Endothelial cell of umbilical vein (primary cell): ENCODE measurements at regions of chrX and their contacts with region 1.

Region 1: GRCh38 chrX:15471016-15471415 is 22.1 kb downstream of the PIR start:
- DNase-seq: peak; percentile 67
- H3K4me3 ChIP-seq: no peak overlapping the region
- H3K27ac ChIP-seq: no peak overlapping the region
- H3K4me1 ChIP-seq: peaks cover 19% of the 10 kb centered on the region
- H3K27me3 ChIP-seq: no peaks in the 10 kb centered on the region
- CTCF ChIP-seq: peak; percentile 62 to 70
- POLR2A ChIP-seq: no peak

Region 2: GRCh38 chrX:15299941-15300851 is 170.8 kb before region 1 on chrX:
- CTCF ChIA-PET with region 1: interaction called, 3 read pairs
- POLR2A ChIA-PET with region 1: no interaction called
- dilution Hi-C with region 1: no loop called
- intact Hi-C with region 1: loop called (anchors 2 kb)
- DNase-seq: peak; percentile 53
- H3K4me3 ChIP-seq: no peak overlapping the region
- H3K27ac ChIP-seq: peak overlapping the region; percentile 28
- H3K4me1 ChIP-seq: peaks cover 21% of the 10 kb centered on the region
- H3K27me3 ChIP-seq: no peaks in the 10 kb centered on the region
- CTCF ChIP-seq: peak; percentile 12 to 20
- POLR2A ChIP-seq: no peak

Region 3: DNA sequence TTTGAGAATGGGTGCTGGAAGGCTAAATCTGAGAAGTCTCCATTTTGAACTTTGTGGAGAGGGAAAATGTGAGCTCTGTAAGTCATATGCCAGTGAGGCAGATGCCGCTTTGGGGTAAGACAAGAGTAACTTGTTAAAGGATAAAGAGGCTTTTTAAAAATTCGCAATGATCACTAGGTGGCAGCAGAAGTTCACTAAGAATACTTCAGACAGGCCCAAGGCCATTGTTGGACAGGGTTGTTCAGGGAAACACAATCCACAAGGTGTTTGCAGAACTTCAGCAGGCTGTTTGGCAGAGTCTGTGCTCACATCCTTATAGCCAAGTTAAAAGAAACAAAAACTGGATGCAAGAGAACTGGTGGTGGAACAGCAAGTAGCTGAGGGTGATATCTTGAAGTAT is 122.0 kb before region 1 on chrX:
- CTCF ChIA-PET with region 1: interaction called, 8 read pairs
- POLR2A ChIA-PET with region 1: no interaction called
- dilution Hi-C with region 1: no loop called
- intact Hi-C with region 1: loop called (anchors 1 kb)
- DNase-seq: peak; percentile 64
- H3K4me3 ChIP-seq: no peak overlapping the region
- H3K27ac ChIP-seq: no peak overlapping the region
- H3K4me1 ChIP-seq: no peaks in the 10 kb centered on the region
- H3K27me3 ChIP-seq: no peaks in the 10 kb centered on the region
- CTCF ChIP-seq: peak; percentile 15 to 38
- POLR2A ChIP-seq: no peak

Region 4: GRCh38 chrX:15404401-15405096 is 66.5 kb before region 1 on chrX:
- CTCF ChIA-PET with region 1: no interaction called
- POLR2A ChIA-PET with region 1: no interaction called
- dilution Hi-C with region 1: no loop called
- intact Hi-C with region 1: loop called (anchors 5 kb)
- DNase-seq: peak; percentile 51
- H3K4me3 ChIP-seq: no peak overlapping the region
- H3K27ac ChIP-seq: peak overlapping the region; percentile 28
- H3K4me1 ChIP-seq: peaks cover 9% of the 10 kb centered on the region
- H3K27me3 ChIP-seq: no peaks in the 10 kb centered on the region
- CTCF ChIP-seq: no peak
- POLR2A ChIP-seq: no peak

Region 5: DNA sequence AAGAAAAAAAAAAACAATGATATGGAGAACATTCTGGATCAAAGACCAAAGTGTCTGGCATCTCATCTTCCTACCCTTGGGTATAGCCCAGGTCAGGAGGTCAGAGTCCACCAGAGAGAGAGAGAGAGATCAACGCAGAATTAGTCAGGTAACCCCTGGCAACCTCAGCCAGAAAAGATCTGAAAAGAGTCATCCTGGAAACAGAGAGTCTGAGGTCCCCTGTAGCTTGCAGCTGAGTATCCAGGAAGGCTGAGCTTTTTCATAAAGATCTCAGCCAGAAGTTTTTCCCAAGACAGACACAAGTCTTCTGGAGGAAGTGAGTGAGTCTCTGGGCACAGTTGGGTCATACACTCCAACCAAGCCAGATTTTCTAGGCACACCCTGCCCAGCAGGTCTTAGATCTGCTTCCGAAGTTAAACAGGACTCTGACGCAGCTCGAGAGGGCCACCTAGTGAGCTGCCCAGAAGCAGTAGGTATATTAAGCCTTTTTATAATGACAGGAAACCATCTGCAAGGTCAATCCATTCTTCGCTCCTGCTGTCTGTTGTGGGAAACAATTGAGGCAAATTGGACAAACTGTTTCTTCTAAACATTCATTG is 94.1 kb after region 1 on chrX:
- CTCF ChIA-PET with region 1: interaction called, 17 read pairs
- POLR2A ChIA-PET with region 1: no interaction called
- dilution Hi-C with region 1: no loop called
- intact Hi-C with region 1: loop called (anchors 1 kb)
- DNase-seq: peak; percentile 87
- H3K4me3 ChIP-seq: no peak overlapping the region
- H3K27ac ChIP-seq: peak overlapping the region; percentile 32
- H3K4me1 ChIP-seq: peaks cover 24% of the 10 kb centered on the region
- H3K27me3 ChIP-seq: no peaks in the 10 kb centered on the region
- CTCF ChIP-seq: peak; percentile 51 to 53
- POLR2A ChIP-seq: no peak

Region 6: GRCh38 chrX:15653961-15654360 is 182.9 kb after region 1 on chrX:
- CTCF ChIA-PET with region 1: no interaction called
- POLR2A ChIA-PET with region 1: no interaction called
- dilution Hi-C with region 1: no loop called
- intact Hi-C with region 1: loop called (anchors 5 kb)
- DNase-seq: no peak
- H3K4me3 ChIP-seq: no peak overlapping the region
- H3K27ac ChIP-seq: no peak overlapping the region
- H3K4me1 ChIP-seq: no peaks in the 10 kb centered on the region
- H3K27me3 ChIP-seq: no peaks in the 10 kb centered on the region
- CTCF ChIP-seq: no peak
- POLR2A ChIP-seq: no peak

Region 7: DNA sequence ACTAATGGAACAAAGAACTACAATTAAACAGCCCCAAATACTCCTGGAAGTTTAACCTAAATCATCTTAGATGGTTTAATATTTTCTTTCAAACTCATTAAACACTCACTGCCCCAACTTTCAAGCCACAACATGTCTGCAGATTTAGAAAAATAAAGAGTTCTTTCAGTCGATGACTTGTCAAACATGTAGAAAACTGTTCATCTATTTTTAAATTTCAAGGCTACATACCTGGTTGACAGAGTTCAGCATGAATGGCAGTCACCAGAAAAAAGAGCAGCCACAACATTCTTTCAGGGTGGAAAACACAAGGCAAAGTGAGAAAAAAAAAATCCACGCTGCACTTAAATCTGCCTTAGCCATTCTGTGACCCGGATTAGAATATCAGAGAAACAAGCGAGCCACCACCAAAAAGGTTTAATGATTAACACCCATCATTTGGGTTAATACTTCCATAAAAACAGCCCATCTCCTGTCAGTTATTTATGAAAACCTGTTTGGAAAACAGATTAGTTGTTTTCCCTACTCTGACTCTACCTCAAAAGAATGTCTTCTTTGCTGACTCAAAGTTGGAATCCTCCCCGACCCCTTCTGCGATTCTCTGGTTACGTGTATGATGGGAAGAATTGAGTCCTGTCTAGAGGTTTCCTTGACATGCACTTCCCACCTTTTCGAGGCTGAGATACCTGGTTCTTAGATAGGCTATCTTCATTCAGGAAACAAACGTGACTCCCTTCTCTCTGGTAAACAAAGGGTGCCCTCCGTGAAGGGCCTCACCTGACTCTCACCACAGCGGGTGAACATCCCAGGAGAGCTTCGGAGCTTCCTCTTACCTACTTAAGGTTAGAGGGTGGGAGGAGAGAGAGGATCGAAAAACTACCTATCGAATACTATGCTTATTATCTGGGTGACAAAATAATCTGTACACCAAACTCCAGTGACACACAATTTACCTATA is 193.8 kb after region 1 on chrX and contains the start of gene CLTRN:
- CTCF ChIA-PET with region 1: no interaction called
- POLR2A ChIA-PET with region 1: no interaction called
- dilution Hi-C with region 1: no loop called
- intact Hi-C with region 1: no loop called
- DNase-seq: no peak
- H3K4me3 ChIP-seq: no peak within 1 kb of the TSS
- H3K27ac ChIP-seq: no peak within 1 kb of the TSS
- H3K4me1 ChIP-seq: no peaks in the 10 kb centered on the region
- H3K27me3 ChIP-seq: peaks cover 8 to 9% of the 10 kb centered on the region in 2 experiments
- CTCF ChIP-seq: no peak
- POLR2A ChIP-seq: no peak
- total RNA-seq, gene CLTRN: not detected in 2 replicates

Region 8: GRCh38 chrX:15674841-15675489 is 203.9 kb after region 1 on chrX:
- CTCF ChIA-PET with region 1: no interaction called
- POLR2A ChIA-PET with region 1: no interaction called
- dilution Hi-C with region 1: no loop called
- intact Hi-C with region 1: loop called (anchors 2 kb)
- DNase-seq: peak; percentile 93
- H3K4me3 ChIP-seq: peak overlapping the region in 2 of 3 experiments; percentile 71 to 78
- H3K27ac ChIP-seq: peak overlapping the region; percentile 48
- H3K4me1 ChIP-seq: peaks cover 12% of the 10 kb centered on the region
- H3K27me3 ChIP-seq: no peaks in the 10 kb centered on the region
- CTCF ChIP-seq: no peak
- POLR2A ChIP-seq: peak; percentile 24